Activated B cell treated with CpG ODN at 0.5 μM for 24 hours (primary cell): ENCODE measurements at regions of chr2 and their contacts with region 1.

Region 1: DNA sequence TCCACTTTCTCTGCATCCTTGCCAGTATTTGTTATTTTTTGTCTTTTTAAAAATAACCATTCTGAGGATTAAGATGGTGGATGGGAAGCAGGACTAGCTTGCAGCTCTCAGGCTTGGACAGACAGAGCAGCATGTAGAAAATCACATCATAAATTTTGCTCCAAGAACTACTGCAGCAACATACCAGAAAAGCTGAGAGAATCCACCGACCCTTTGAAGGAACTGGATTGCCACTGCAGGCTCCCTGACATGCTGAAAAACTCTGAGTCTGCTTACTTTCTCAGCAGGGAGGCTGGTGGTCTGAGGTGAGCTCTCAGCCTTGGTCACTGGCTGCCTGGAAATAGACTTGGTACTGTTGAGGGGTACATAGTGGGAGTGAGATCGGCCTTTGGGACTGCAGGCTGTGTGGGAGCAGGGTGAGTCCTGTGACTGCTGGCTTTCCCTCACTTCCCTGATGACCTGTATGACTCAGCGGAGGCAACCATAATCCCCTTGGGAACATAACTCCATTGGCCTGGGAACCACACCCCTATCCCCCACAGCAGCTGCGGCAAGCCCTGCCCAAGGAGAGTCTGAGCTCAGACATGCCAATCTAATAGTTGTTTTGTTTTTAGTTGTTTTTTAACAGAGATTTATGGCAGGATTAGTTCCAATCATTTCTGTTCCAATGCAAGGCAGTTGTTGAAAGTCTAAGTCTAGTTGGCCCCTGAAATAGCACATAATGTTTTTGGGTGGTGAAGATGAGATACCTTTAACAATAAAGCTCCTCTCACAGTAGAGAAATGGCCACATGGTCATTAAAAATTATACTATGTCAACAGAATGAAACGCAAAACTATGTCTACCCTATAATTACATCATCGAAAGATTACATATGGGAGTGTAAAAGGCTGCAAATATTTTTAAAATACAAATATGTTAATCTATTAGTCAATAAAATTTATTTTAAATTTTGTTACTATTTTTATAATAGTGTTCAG is 414.2 kb upstream of the CHAC2 start:
- DNase-seq: no peak
- ATAC-seq: no peak
- H3K4me3 Mint-ChIP-seq: no peak overlapping the region
- H3K27ac Mint-ChIP-seq: no peak overlapping the region
- H3K4me1 Mint-ChIP-seq: no peaks in the 10 kb centered on the region
- H3K27me3 Mint-ChIP-seq: peaks cover 2% of the 10 kb centered on the region
- CTCF ChIP-seq: no peak

Region 2: GRCh38 chr2:52668724-52669123 is 684.7 kb before region 1 on chr2:
- CTCF ChIA-PET with region 1: no interaction called
- POLR2A ChIA-PET with region 1: no interaction called
- intact Hi-C with region 1: no loop called
- DNase-seq: no peak
- ATAC-seq: no peak
- H3K4me3 Mint-ChIP-seq: no peak overlapping the region
- H3K27ac Mint-ChIP-seq: no peak overlapping the region
- H3K4me1 Mint-ChIP-seq: no peaks in the 10 kb centered on the region
- H3K27me3 Mint-ChIP-seq: no peaks in the 10 kb centered on the region
- CTCF ChIP-seq: no peak

Region 3: DNA sequence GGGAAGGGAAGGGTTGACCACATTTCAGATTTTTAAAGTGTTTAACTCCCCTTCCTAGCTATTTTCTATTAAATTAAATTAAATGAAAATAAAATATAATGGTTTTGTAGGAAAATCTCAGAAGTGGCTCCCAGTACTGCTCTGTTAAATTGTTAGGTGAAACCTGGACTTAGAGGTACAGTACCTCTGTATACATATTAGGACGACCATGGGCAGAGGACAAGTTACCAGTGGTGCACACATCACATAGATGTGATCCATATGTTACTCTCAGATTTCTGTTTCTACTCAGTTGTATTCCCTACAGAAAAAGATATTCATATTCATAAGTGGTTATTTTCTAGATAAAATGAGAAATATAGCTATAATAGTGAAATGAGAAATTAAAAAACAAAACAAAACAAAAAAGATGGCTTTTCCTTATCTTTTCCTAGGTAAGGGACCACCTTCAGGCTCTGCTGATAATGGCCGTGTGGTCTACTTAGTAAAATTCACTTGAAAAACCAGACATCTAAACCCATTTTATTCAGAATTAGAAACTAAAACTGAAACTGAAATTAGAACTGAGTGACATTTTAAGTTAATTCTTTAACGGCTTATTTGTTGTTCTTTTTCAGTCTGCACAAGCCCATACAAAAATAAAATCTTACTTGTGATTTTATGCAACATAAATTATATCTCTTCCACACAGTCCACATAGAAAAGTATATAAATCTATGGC is 418.3 kb before region 1 on chr2:
- CTCF ChIA-PET with region 1: no interaction called
- POLR2A ChIA-PET with region 1: no interaction called
- intact Hi-C with region 1: loop called (anchors 5 kb)
- DNase-seq: no peak
- ATAC-seq: no peak
- H3K4me3 Mint-ChIP-seq: no peak overlapping the region
- H3K27ac Mint-ChIP-seq: no peak overlapping the region
- H3K4me1 Mint-ChIP-seq: no peaks in the 10 kb centered on the region
- H3K27me3 Mint-ChIP-seq: no peaks in the 10 kb centered on the region
- CTCF ChIP-seq: no peak